A673 (cell line): ENCODE measurements at regions of chr6 and their contacts with region 1.

Region 1: DNA sequence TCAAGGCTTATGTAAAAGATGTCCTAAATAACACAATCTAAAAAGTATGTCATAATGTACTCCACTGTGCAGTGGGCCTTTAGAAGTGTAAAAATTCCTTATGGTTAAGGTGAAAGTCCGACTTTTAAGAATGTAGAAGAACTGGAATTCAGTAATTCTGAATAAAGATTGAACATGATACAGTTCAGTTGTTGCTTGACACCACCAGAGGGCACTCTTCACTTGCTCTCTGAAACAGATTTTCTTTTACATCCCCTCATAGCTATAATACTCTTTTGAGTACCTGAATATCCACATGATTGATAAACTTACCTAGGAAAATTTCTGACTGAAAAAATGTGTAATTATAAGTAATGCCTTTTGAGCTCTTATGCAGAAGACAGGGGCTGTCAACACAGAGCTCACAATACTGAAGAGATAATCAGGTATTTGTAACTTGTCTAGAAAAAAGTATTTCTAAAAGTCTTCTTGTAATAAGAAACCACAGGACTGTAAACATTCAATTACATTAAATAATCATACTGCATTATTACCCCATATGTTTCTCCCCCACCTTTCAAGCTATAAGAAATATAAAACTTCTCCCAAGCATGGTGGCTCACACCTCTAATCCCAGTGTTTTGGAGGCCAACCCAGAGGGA is 92.1 kb downstream of the POPDC3 start:
- DNase-seq: peak; percentile 54
- H3K4me3 ChIP-seq: no peak overlapping the region
- H3K27ac ChIP-seq: no peak overlapping the region
- H3K4me1 ChIP-seq: no peaks in the 10 kb centered on the region
- H3K27me3 ChIP-seq: no peaks in the 10 kb centered on the region
- CTCF ChIP-seq: peak; percentile 89

Region 2: GRCh38 chr6:105363100-105363754 is 275.5 kb after region 1 on chr6:
- CTCF ChIA-PET with region 1: interaction called, 12 read pairs
- POLR2A ChIA-PET with region 1: no interaction called
- intact Hi-C with region 1: loop called (anchors 1 kb)
- DNase-seq: peak; percentile 48
- H3K4me3 ChIP-seq: no peak overlapping the region
- H3K27ac ChIP-seq: no peak overlapping the region
- H3K4me1 ChIP-seq: no peaks in the 10 kb centered on the region
- H3K27me3 ChIP-seq: no peaks in the 10 kb centered on the region
- CTCF ChIP-seq: peak; percentile 64

Region 3: GRCh38 chr6:105402939-105403935 is 315.5 kb after region 1 on chr6 and contains the start of gene PREP:
- CTCF ChIA-PET with region 1: interaction called, 6 read pairs
- POLR2A ChIA-PET with region 1: no interaction called
- intact Hi-C with region 1: loop called (anchors 1 kb)
- DNase-seq: peak; percentile 91
- H3K4me3 ChIP-seq: peak within 1 kb of the TSS; percentile 98
- H3K27ac ChIP-seq: peak within 1 kb of the TSS; percentile 80
- H3K4me1 ChIP-seq: peaks cover 11% of the 10 kb centered on the region
- H3K27me3 ChIP-seq: no peaks in the 10 kb centered on the region
- CTCF ChIP-seq: peak; percentile 76
- total RNA-seq, gene PREP: 34.1 and 35.5 TPM in 2 replicates

Region 4: DNA sequence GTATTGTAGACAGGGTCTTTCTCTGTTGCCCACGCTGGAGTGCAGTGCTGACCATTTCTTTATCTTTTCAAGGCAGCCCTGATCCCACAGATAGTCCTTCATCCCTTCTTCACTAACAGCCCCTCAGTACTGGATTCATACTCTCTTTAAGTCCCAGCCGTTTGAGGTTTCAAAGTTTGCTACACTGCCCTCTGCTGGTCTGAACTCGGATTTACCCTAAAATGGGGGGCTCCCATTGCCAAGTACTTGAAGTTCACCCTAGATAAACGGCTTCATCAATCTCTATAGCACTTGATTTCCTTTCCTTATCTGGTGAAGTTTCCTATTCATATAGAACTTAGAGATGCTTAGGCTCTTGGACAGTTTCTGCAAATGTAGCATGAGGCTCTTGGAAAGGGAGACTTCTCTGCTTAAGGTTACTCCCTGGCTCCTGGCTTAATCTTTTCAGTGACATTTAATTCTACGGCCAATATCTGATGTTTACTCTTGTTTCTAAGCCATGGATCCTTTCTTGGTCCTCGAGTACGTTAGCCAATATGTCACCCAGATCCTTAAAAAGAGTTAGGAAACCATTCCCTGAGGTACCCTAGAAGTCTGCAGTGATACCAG is 336.6 kb after region 1 on chr6:
- CTCF ChIA-PET with region 1: no interaction called
- POLR2A ChIA-PET with region 1: no interaction called
- intact Hi-C with region 1: loop called (anchors 1 kb)
- DNase-seq: peak; percentile 77
- H3K4me3 ChIP-seq: no peak overlapping the region
- H3K27ac ChIP-seq: no peak overlapping the region
- H3K4me1 ChIP-seq: no peaks in the 10 kb centered on the region
- H3K27me3 ChIP-seq: no peaks in the 10 kb centered on the region
- CTCF ChIP-seq: peak; percentile 82